ENCODE measurements at regions of chr6 and their contacts with region 1.

Region 1: DNA sequence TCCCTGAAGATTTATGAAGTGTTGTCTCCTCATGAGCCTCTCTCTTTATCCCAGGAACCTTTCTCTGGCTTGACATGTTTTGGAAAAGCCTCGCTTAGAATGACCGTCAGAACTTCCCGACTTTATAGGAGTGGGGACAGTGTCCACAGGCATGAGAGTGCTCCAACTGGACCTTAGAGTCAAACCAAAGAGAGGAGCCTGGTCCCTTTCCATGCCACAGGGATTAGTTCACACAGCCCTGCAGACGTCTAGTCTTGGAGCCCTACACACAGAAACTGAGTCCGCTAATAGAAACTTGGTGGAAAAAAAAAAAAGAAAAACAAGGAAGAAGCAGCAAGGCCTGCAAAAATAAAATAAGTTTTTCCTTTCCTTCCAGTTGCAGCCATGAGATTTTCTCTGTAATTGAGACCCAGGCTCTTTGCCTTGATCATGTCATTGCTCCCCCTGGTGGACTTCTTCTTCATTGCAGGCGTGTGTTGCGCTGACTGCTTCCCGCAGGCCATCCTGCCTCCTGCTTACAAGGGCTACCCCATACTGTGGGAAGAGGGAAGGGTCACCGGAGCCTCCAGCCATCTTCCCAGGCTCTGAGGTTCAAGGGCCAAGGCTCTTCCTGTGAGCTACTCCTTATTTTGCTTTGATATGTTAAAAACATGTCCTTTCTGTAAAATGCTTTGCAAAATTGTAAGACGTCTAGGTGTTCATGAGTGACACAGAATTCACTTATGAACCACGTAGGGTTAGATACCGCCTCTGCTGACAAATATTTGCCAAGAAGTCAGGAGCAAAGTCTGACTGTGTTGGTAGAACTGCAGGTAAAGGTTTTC is 201.0 kb downstream of the UST start:
- DNase-seq: peak; percentile 39 to 78 (median 59)
- ATAC-seq: peak; percentile 90
- H3K4me3 ChIP-seq: no peak overlapping the region
- H3K4me3 Mint-ChIP-seq: no peak overlapping the region
- H3K27ac ChIP-seq: no peak overlapping the region
- H3K27ac Mint-ChIP-seq: peak overlapping the region in 1 of 9 donors; percentile 41
- H3K4me1 ChIP-seq: no peaks in the 10 kb centered on the region
- H3K4me1 Mint-ChIP-seq: peaks cover 0 to 5% (median 0%) of the 10 kb centered on the region in 7 donors
- H3K27me3 ChIP-seq: no peaks in the 10 kb centered on the region
- H3K27me3 Mint-ChIP-seq: peaks cover 5 to 30% (median 13%) of the 10 kb centered on the region in 5 donors

Region 2: DNA sequence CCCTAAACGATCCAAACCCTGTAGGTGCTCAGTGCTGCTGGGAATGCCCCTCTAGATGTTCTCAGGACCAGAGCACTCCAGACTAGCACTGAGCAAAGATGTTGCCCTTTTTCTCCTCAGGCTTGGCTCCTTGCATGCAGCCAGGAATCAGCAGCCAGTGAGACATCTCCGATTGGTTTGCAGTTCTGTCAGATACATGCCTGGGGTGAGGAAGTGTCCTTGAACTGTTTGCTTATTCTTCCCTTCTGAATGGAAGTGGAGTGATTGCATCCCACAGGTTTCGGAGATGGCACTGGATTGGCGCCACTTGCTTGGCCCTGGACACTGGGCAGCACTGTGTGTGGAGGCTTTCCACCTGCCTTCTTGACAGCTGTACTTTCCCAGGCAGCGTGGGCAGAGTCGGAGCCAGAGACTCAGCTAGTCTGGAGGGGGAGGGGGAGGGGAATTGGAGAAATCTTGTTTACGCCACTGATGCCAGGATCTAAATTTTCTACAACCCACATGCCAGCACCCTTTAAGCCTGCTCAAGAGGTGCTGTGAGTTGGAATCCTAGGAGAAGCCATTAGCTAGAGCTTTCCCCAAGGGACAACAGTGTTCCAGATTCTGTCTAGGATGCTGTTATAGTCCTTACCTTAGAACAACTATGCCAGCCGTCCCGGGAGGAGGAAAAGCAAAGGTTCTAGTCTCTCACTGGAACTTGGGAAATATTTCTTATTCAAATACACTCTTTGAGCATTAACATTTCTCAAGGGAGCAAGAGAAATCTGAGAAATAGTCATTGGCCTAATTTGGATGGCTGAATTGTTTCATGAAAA is 654.4 kb before region 1 on chr6:
- CTCF ChIA-PET with region 1: no interaction called
- POLR2A ChIA-PET with region 1: no interaction called
- intact Hi-C with region 1: no loop called
- DNase-seq: no peak
- ATAC-seq: no peak
- H3K4me3 ChIP-seq: no peak overlapping the region
- H3K4me3 Mint-ChIP-seq: no peak overlapping the region
- H3K27ac ChIP-seq: no peak overlapping the region
- H3K27ac Mint-ChIP-seq: no peak overlapping the region
- H3K4me1 ChIP-seq: no peaks in the 10 kb centered on the region
- H3K4me1 Mint-ChIP-seq: no peaks in the 10 kb centered on the region
- H3K27me3 ChIP-seq: no peaks in the 10 kb centered on the region
- H3K27me3 Mint-ChIP-seq: peaks cover 0 to 23% (median 5%) of the 10 kb centered on the region in 5 donors

Region 3: DNA sequence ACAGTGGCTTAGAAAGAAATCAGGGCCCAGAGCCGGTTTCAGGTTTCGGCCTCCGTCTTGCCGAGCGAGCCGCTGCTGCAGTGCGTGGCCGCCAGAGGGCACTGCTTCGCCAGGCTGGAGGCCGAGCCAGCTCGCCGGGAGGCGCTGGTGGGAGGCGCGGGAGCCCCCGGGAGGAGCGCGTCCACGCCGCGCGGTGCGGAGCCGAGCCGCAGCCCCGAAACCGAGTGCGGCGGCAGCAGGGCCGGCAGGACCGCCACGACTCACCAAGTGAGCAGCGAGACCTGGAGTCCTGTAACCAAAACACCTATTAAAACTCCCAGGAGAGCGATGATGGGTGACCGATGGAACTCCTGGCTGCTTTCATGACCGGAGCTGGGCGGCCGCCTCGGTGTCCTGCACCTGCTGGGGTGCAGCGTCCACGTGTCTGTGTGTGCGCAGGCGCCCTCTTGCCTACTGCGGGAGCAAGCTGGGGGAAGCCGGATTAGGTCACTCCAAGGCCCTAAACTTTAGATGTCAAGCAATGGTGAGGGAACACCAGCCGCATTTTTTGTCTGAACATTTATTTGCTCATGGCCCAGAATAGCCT is 387.9 kb before region 1 on chr6:
- CTCF ChIA-PET with region 1: interaction called, 3 read pairs
- POLR2A ChIA-PET with region 1: no interaction called
- intact Hi-C with region 1: loop called in 1 of 2 experiments (anchors 1 kb)
- DNase-seq: peak; percentile 7 to 73 (median 53)
- ATAC-seq: peak; percentile 91
- H3K4me3 ChIP-seq: peak overlapping the region; percentile 31
- H3K4me3 Mint-ChIP-seq: peak overlapping the region in 5 of 10 donors; percentile 22 to 49 (median 28)
- H3K27ac ChIP-seq: no peak overlapping the region
- H3K27ac Mint-ChIP-seq: no peak overlapping the region
- H3K4me1 ChIP-seq: no peaks in the 10 kb centered on the region
- H3K4me1 Mint-ChIP-seq: peaks cover 0 to 8% (median 7%) of the 10 kb centered on the region in 7 donors
- H3K27me3 ChIP-seq: no peaks in the 10 kb centered on the region
- H3K27me3 Mint-ChIP-seq: peaks cover 21 to 44% (median 33%) of the 10 kb centered on the region in 5 donors

Region 4: GRCh38 chr6:148578245-148578732 is 369.5 kb before region 1 on chr6:
- CTCF ChIA-PET with region 1: no interaction called
- POLR2A ChIA-PET with region 1: no interaction called
- intact Hi-C with region 1: loop called in 1 of 2 experiments (anchors 1 kb)
- DNase-seq: peak in 2 of 9 donors; percentile 13 to 31
- ATAC-seq: peak; percentile 90
- H3K4me3 ChIP-seq: no peak overlapping the region
- H3K4me3 Mint-ChIP-seq: no peak overlapping the region
- H3K27ac ChIP-seq: no peak overlapping the region
- H3K27ac Mint-ChIP-seq: no peak overlapping the region
- H3K4me1 ChIP-seq: no peaks in the 10 kb centered on the region
- H3K4me1 Mint-ChIP-seq: peaks cover 0 to 2% (median 0%) of the 10 kb centered on the region in 7 donors
- H3K27me3 ChIP-seq: no peaks in the 10 kb centered on the region
- H3K27me3 Mint-ChIP-seq: peaks cover 27 to 47% (median 35%) of the 10 kb centered on the region in 5 donors

Region 5: GRCh38 chr6:148915810-148916209 is 32.0 kb before region 1 on chr6:
- CTCF ChIA-PET with region 1: no interaction called
- POLR2A ChIA-PET with region 1: no interaction called
- intact Hi-C with region 1: no loop called
- DNase-seq: no peak
- ATAC-seq: no peak
- H3K4me3 ChIP-seq: no peak overlapping the region
- H3K4me3 Mint-ChIP-seq: no peak overlapping the region
- H3K27ac ChIP-seq: no peak overlapping the region
- H3K27ac Mint-ChIP-seq: no peak overlapping the region
- H3K4me1 ChIP-seq: no peaks in the 10 kb centered on the region
- H3K4me1 Mint-ChIP-seq: peaks cover 0 to 8% (median 0%) of the 10 kb centered on the region in 7 donors
- H3K27me3 ChIP-seq: no peaks in the 10 kb centered on the region
- H3K27me3 Mint-ChIP-seq: peaks cover 0 to 8% (median 0%) of the 10 kb centered on the region in 5 donors

Measured in naive thymus-derived CD4-positive, alpha-beta T cell (primary cell).